ENCODE measurements at regions of chr11 and their contacts with region 1.

Region 1: GRCh38 chr11:111283945-111284481 is 14.3 kb upstream of the POU2AF3 start:
- DNase-seq: no peak
- H3K4me3 ChIP-seq: no peak overlapping the region
- H3K27ac ChIP-seq: no peak overlapping the region
- H3K4me1 ChIP-seq: no peaks in the 10 kb centered on the region
- H3K27me3 ChIP-seq: no peaks in the 10 kb centered on the region
- CTCF ChIP-seq: no peak

Region 2: DNA sequence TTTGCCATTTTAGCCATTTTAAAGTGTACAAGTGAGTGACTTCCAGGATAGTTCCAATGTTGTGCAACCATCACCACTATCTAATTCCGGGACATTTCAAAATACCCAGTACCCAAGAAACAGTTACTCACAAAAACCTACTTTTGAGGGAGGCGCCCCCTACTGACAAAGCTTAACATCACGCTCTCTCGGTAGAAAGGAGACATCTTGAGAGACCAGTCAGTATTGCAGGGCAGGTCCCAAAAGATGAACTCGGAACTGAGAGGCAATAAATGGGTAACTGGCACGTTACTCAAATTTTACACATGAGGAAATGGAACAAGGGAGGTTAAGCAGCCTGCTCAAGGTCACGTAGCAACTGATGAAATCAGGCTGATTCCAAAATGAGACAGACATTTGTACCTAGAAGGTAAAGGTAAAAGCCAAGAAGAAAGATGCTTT is 145.1 kb after region 1 on chr11:
- intact Hi-C with region 1: loop called (anchors 5 kb)
- DNase-seq: peak; percentile 74 to 77
- H3K4me3 ChIP-seq: no peak overlapping the region
- H3K27ac ChIP-seq: no peak overlapping the region
- H3K4me1 ChIP-seq: no peaks in the 10 kb centered on the region
- H3K27me3 ChIP-seq: no peaks in the 10 kb centered on the region
- CTCF ChIP-seq: peak; percentile 51 to 73

Region 3: DNA sequence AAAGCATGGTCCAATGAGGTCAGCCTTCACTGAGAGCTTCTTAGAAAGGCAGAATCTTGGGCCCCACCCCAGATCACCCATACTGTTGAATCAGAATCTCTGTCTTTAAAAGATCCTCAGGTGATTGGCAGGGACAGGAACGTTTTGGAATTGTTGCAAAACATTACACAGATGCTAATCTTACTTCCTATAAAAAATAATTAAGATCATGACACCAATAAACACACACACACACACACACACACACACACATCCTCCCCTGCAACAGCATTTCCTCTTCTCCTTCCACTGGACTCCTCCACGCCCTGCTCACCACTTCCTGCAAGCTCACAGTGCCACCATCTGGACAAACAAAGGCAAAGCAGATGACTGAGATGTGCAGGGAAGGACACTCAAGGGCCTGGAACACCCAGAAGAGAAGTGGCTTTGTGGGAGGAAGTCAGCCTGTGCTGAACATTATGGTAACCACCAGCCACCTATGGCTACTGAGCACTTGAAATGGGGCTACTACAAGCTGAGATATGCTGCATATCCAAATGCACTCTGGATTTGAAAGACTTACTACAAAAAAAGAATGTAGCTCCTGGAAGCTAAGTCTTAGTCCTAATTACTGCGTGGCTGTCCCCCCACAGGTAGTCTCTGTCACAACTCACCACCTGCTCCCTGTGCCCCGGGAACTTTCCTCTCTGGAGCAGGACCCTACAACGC is 162.5 kb after region 1 on chr11:
- intact Hi-C with region 1: loop called (anchors 5 kb)
- DNase-seq: peak; percentile 77 to 84
- H3K4me3 ChIP-seq: no peak overlapping the region
- H3K27ac ChIP-seq: no peak overlapping the region
- H3K4me1 ChIP-seq: no peaks in the 10 kb centered on the region
- H3K27me3 ChIP-seq: peaks cover 0 to 4% of the 10 kb centered on the region in 2 donors
- CTCF ChIP-seq: peak; percentile 65 to 84

Measured in tibial artery (tissue), 4 donors.